ENCODE measurements at regions of chr21 and their contacts with region 1.

Region 1: DNA sequence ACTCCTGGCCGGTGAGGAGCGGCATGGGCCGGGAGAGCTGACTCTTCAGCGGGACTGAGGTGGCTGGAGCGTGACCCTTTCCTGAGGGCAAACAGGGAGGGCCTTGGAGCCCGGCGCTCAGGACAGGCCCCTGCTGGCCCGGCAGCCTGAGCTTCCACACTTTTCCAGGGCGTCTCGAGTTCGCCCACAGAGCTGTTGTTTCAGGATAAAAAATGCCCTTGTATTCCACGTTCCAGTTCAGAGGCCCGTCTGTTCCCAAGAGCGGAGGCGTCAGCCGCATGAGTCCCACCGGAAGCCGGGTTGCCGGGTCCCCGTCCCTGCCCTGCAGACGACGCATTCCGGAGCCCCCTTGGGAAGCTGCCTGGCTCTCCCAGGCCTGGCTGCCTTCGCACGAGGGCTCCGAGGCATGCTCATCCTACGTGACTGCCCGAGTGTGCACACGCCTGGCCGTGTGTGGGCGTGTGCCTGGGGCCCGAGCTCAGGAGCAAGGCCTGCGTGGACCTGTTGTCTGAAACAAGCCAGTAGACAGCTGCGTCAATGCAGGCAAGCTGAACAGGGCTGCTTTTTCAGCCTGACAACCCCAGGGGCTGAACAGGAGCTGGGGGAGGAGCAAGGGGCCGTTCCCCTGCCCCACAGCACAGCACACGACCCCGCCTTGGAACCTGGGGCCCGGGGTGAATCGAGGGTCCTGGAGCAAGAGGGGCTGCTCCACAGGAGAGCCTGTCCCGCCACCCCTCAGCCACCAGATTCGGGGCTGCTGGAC is 125.9 kb downstream of the SIK1 start:
- DNase-seq: no peak
- H3K4me3 ChIP-seq: no peak overlapping the region
- H3K27ac ChIP-seq: no peak overlapping the region
- H3K4me1 ChIP-seq: peaks cover 0 to 3% (median 1%) of the 10 kb centered on the region in 4 experiments; a peak in 2 of 7 replicates
- H3K27me3 ChIP-seq: no peaks in the 10 kb centered on the region
- CTCF ChIP-seq: no peak
- EP300 ChIP-seq: no peak
- POLR2A ChIP-seq: no peak
- RAD21 ChIP-seq: no peak

Region 2: DNA sequence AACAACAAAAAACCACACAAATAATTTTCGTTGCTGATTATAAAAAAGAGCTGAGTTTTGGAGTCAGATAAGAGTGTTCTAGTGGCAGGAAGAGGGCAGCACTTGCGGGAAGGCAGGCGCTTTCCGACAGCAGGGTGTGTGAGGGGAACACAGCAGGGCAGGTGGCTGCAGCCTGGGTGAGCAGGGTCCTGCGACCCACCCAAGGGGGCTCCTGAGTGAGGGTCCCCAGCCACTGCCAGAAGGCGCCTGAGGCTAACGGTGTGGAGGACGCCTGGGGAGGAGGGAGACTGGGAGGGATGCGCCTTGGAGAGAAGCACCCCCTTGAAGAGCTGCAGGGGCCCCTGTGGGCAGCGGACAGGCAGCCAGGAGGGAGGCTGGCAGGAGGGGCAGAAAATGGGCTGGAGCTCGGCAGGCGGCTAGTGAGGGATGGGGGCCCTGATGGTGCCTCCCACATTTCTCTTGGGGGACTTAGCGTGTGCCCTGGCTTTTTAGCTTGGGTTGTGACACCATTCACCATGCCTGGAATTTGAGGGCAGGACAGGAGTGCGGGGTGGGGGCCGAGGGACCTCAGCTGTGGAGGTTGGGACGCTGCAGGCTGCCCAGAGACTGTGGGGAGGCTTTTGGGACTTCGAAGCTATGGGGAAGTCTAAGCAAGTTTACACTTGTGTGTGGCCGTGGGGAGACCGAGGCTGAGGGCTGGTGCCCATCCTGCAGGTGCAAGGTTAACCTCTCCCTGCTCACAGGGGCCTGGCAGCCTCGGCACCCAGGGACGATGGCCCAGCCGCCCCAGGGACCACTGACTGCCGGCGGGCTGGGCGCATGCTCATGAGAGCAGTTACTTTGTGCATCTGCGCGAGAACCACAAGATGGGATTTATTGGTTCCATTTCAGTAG is 14.5 kb after region 1 on chr21:
- CTCF ChIA-PET with region 1: interaction called, 12 read pairs
- POLR2A ChIA-PET with region 1: interaction called, 3 read pairs
- DNase-seq: no peak
- H3K4me3 ChIP-seq: no peak overlapping the region
- H3K27ac ChIP-seq: no peak overlapping the region
- H3K4me1 ChIP-seq: peaks cover 5 to 23% (median 16%) of the 10 kb centered on the region in 4 experiments
- H3K27me3 ChIP-seq: no peaks in the 10 kb centered on the region
- CTCF ChIP-seq: peak in 2 of 3 experiments; percentile 4 to 25; a peak in 1 of 4 replicates
- EP300 ChIP-seq: no peak
- POLR2A ChIP-seq: no peak
- RAD21 ChIP-seq: peak; percentile 19 to 31; a peak in 3 of 4 replicates

Region 3: GRCh38 chr21:43728467-43729390 is 427.7 kb after region 1 on chr21:
- CTCF ChIA-PET with region 1: no interaction called
- POLR2A ChIA-PET with region 1: no interaction called
- DNase-seq: peak; percentile 54 to 87
- H3K4me3 ChIP-seq: peak overlapping the region; percentile 39 to 83 (median 71)
- H3K27ac ChIP-seq: peak overlapping the region; percentile 83; the same call in 1 of the 2 replicates
- H3K4me1 ChIP-seq: peaks cover 0 to 21% (median 11%) of the 10 kb centered on the region in 4 experiments; a peak in 6 of 7 replicates
- H3K27me3 ChIP-seq: no peaks in the 10 kb centered on the region
- CTCF ChIP-seq: peak in 1 of 3 experiments; percentile 15; a peak in 1 of 4 replicates
- EP300 ChIP-seq: no peak
- POLR2A ChIP-seq: peak in 1 of 2 experiments; percentile 82; a peak in 2 of 3 replicates
- RAD21 ChIP-seq: 0 out of 4 replicates have a peak, but pooled peaks of 1 of the 2 experiments have one; percentile 14